HepG2 (cell line): ENCODE measurements at regions of chr5 and their contacts with region 1.

Region 1: DNA sequence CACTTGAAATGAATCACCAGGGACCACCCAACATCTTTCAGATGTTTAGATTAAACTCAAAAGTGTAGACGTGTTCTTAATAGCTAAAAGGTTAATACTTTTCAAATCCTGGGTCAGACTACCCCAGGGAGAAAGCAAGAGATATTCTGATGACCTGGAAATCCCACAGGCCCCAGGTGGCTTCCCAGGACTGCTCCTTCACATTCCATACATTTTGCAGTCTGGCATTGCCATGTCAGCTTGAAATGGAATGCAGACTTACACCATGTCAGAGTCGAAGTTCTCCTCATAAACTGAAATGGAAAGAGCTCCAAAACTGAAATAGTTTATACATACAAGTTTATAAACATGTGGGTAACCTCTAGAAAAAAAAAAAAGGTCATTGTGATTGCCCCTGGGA is 61.5 kb downstream of the TMEM167A start:
- DNase-seq: no peak
- ATAC-seq: no peak
- H3K4me3 ChIP-seq: no peak overlapping the region
- H3K27ac ChIP-seq: no peak overlapping the region
- H3K4me1 ChIP-seq: no peaks in the 10 kb centered on the region
- H3K27me3 ChIP-seq: no peaks in the 10 kb centered on the region; a peak in 2 of 5 replicates
- CTCF ChIP-seq: no peak
- EP300 ChIP-seq: no peak
- POLR2A ChIP-seq: no peak
- RAD21 ChIP-seq: no peak

Region 2: GRCh38 chr5:82984786-82985735 is 30.6 kb before region 1 on chr5:
- CTCF ChIA-PET with region 1: no interaction called
- POLR2A ChIA-PET with region 1: no interaction called
- in situ Hi-C with region 1: no loop called
- intact Hi-C with region 1: loop called (anchors 2 kb)
- DNase-seq: peak; percentile 14
- ATAC-seq: peak; percentile 76
- H3K4me3 ChIP-seq: peak overlapping the region; percentile 17 to 49 (median 29); a peak in 3 of 6 replicates
- H3K27ac ChIP-seq: peak overlapping the region; percentile 12
- H3K4me1 ChIP-seq: peaks cover 32% of the 10 kb centered on the region
- H3K27me3 ChIP-seq: no peaks in the 10 kb centered on the region
- CTCF ChIP-seq: no peak
- EP300 ChIP-seq: 0 out of 4 replicates have a peak, but pooled peaks of 1 of the 2 experiments have one; percentile 14
- POLR2A ChIP-seq: no peak
- RAD21 ChIP-seq: no peak

Region 3: GRCh38 chr5:83076742-83077661 is 61.3 kb after region 1 on chr5 and contains the starts of genes TMEM167A and XRCC4:
- CTCF ChIA-PET with region 1: no interaction called
- POLR2A ChIA-PET with region 1: no interaction called
- in situ Hi-C with region 1: no loop called
- intact Hi-C with region 1: no loop called
- DNase-seq: peak; percentile 99
- ATAC-seq: peak; percentile 99
- H3K4me3 ChIP-seq: peak within 1 kb of the TSS; percentile 83 to 94 (median 90)
- H3K27ac ChIP-seq: peak within 1 kb of the TSS; percentile 94
- H3K4me1 ChIP-seq: peaks cover 49% of the 10 kb centered on the region
- H3K27me3 ChIP-seq: no peaks in the 10 kb centered on the region; a peak in 1 of 5 replicates
- CTCF ChIP-seq: no peak
- EP300 ChIP-seq: no peak
- POLR2A ChIP-seq: peak; percentile 92 to 98
- RAD21 ChIP-seq: peak; percentile 41; the same call in 1 of the 2 replicates
- total RNA-seq, gene TMEM167A: 78.7 and 122 TPM in 2 replicates
- total RNA-seq, gene XRCC4: 12.6 and 21.8 TPM in 2 replicates

Region 4: GRCh38 chr5:83142526-83142925 is 126.8 kb after region 1 on chr5:
- CTCF ChIA-PET with region 1: no interaction called
- POLR2A ChIA-PET with region 1: no interaction called
- in situ Hi-C with region 1: no loop called
- intact Hi-C with region 1: no loop called
- DNase-seq: no peak
- ATAC-seq: no peak
- H3K4me3 ChIP-seq: no peak overlapping the region
- H3K27ac ChIP-seq: no peak overlapping the region
- H3K4me1 ChIP-seq: no peaks in the 10 kb centered on the region
- H3K27me3 ChIP-seq: no peaks in the 10 kb centered on the region
- CTCF ChIP-seq: no peak
- EP300 ChIP-seq: no peak
- POLR2A ChIP-seq: no peak
- RAD21 ChIP-seq: no peak